CD4-positive, alpha-beta T cell (primary cell): ENCODE measurements at regions of chr12 and their contacts with region 1.

Region 1: DNA sequence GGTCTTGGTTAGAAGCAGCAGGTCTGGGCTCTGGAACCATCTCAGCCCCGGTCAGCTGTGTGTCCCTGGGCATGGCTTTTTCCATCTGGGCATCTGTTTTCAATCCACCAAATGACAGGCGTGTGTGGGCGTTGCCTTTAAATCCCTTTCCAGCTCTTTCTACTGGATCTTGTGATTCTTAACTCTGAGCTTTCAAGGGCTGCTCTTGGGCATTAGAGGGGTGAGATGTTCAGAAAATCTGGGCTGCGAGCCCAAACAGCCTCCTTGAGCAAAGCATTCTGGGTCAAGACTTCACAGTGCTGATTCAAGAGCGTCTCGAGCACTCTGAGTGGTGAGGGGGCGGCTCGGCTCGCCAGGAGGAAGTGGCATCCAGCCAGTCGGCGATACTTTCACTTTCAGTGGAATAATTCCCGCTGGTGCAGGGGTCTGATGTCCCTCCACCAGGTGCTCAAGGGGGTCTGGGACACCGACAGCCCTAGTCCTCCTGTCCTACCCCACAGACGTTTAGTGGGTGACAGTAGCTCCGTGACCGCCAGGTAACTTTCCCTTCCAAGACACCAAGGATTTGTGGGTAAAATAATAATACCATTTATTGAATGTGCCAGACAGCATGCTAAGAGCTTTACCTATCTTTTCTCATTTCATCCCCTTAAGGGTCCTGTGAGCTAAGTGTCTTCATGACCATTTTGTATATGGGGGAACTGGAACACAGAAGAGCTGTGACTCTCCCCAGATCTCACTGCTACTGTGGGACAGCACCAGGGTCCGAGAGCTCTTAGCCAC is 114.0 kb downstream of the PLXNC1 start:
- DNase-seq: peak; percentile 50 to 86 (median 66)
- ATAC-seq: peak; percentile 90
- H3K4me3 ChIP-seq: peak overlapping the region; percentile 82
- H3K4me3 Mint-ChIP-seq: peak overlapping the region; percentile 98
- H3K27ac ChIP-seq: peak overlapping the region; percentile 89 to 92
- H3K27ac Mint-ChIP-seq: peak overlapping the region; percentile 99
- H3K4me1 ChIP-seq: peaks cover 31% of the 10 kb centered on the region
- H3K4me1 Mint-ChIP-seq: peaks cover 46% of the 10 kb centered on the region
- H3K27me3 ChIP-seq: no peaks in the 10 kb centered on the region
- H3K27me3 Mint-ChIP-seq: no peaks in the 10 kb centered on the region
- CTCF ChIP-seq: no peak

Region 2: DNA sequence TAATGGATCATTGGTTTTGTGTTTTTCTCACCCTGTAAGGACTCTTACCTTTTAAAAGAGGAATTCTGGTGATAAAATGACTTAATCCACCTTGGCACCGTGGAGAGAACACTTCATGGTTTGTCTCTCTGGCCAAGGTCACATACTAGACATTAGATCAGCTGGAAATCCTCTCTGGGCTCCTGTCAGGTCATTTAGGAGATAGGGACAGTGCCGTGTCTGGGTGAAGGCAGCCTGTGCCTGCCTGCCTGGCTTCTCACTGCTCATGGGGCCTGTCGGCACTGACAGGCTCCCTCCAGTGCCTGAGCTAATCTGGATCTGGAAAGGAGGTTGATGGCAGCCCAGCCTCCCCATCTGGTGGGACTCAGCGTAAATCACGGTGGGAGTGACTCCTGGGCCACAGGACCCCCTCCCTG is 579.6 kb before region 1 on chr12:
- CTCF ChIA-PET with region 1: no interaction called
- POLR2A ChIA-PET with region 1: no interaction called
- intact Hi-C with region 1: loop called in 1 of 2 experiments (anchors 10 kb)
- DNase-seq: no peak
- ATAC-seq: no peak
- H3K4me3 ChIP-seq: no peak overlapping the region
- H3K4me3 Mint-ChIP-seq: no peak overlapping the region
- H3K27ac ChIP-seq: no peak overlapping the region
- H3K27ac Mint-ChIP-seq: no peak overlapping the region
- H3K4me1 ChIP-seq: peaks cover 21% of the 10 kb centered on the region
- H3K4me1 Mint-ChIP-seq: peaks cover 47% of the 10 kb centered on the region
- H3K27me3 ChIP-seq: no peaks in the 10 kb centered on the region
- H3K27me3 Mint-ChIP-seq: no peaks in the 10 kb centered on the region
- CTCF ChIP-seq: no peak

Region 3: DNA sequence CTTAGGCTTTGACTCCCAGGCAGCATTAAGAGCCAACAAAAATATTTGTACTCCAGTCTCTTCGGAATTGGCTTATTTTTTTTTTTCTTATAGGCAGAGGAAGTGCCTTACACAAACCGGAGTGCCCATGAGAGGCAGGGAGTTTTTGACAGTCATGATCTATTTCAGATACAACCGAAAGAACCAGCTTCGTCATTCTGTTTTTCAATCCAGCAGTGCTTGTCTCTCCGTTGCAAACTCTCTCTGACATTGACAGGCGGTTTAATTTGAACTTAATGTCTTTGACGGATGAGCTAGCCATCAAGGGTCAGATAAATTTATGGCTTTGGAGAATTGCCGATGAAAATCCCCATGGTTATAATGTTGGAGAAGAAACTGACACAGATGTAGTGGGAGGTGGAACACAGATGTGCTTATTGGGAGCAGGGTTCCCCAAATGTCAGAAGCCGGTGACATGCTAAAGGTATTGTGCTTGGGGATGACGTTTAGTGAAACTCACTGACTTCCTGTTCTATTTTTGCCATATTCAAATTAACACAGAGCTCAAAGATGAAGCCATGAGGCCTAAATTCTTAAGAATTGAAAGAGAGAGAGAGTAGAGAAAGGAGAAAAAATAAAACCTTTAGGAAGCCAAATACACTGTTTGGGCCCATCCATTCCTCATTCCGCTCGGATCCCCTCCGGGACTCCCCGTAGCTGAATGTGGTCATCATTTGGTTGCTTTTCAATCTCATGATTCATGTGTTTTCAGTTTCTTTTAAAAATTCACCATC is 54.4 kb before region 1 on chr12:
- CTCF ChIA-PET with region 1: no interaction called
- POLR2A ChIA-PET with region 1: interaction called, 33 read pairs
- intact Hi-C with region 1: loop called in 1 of 2 experiments (anchors 2 kb)
- DNase-seq: peak in 10 of 14 experiments; percentile 1 to 78 (median 15)
- ATAC-seq: peak; percentile 80
- H3K4me3 ChIP-seq: peak overlapping the region; percentile 41
- H3K4me3 Mint-ChIP-seq: peak overlapping the region; percentile 74
- H3K27ac ChIP-seq: peak overlapping the region; percentile 71 to 83
- H3K27ac Mint-ChIP-seq: peak overlapping the region; percentile 97
- H3K4me1 ChIP-seq: peaks cover 36% of the 10 kb centered on the region
- H3K4me1 Mint-ChIP-seq: peaks cover 53% of the 10 kb centered on the region
- H3K27me3 ChIP-seq: no peaks in the 10 kb centered on the region
- H3K27me3 Mint-ChIP-seq: no peaks in the 10 kb centered on the region
- CTCF ChIP-seq: no peak

Region 4: DNA sequence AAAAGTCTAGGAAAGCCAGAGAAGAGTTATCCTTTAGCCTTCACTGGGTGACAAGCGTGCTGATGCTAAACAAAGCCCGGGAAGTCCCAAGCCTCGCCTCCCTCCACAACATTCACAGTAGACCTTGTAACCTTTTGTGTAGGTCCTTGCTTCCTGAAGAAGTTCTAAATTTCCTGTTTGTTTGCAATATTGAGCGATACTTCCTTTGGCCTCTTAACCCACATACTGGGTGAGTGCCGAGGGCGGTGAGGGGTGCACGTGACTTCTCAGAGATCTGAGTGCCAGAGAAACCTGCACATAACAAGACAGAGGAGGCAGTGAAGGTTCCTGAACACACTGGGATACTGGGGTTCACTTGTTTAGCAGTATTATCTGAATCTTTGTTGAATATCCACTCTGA is 20.3 kb after region 1 on chr12:
- CTCF ChIA-PET with region 1: no interaction called
- POLR2A ChIA-PET with region 1: interaction called, 16 read pairs
- intact Hi-C with region 1: no loop called
- DNase-seq: peak in 13 of 14 experiments; percentile 21 to 82 (median 41)
- ATAC-seq: peak; percentile 95
- H3K4me3 ChIP-seq: peak overlapping the region; percentile 27
- H3K4me3 Mint-ChIP-seq: peak overlapping the region; percentile 49
- H3K27ac ChIP-seq: peak overlapping the region; percentile 11 to 58
- H3K27ac Mint-ChIP-seq: peak overlapping the region; percentile 80
- H3K4me1 ChIP-seq: peaks cover 25% of the 10 kb centered on the region
- H3K4me1 Mint-ChIP-seq: peaks cover 22% of the 10 kb centered on the region
- H3K27me3 ChIP-seq: no peaks in the 10 kb centered on the region
- H3K27me3 Mint-ChIP-seq: no peaks in the 10 kb centered on the region
- CTCF ChIP-seq: no peak

Region 5: DNA sequence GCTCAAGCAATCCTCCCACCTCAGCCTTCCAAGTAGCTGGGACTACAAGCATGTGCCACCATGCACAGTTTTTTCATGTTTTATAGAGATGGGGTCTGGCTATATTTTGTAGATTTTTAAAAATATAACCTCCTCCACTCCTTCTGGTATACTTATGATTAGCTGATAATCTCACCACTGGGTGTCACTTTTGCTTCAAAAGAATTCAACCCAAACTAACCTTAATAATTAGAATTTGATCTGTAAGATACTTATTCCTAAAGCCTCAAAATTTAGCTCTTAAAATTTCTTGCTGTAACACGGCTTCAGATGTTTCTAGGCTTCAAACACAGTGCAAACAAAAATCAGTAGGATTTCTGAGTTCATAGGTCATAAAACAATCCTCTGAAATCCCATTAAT is 66.9 kb after region 1 on chr12:
- CTCF ChIA-PET with region 1: no interaction called
- POLR2A ChIA-PET with region 1: no interaction called
- intact Hi-C with region 1: no loop called
- DNase-seq: no peak
- ATAC-seq: no peak
- H3K4me3 ChIP-seq: no peak overlapping the region
- H3K4me3 Mint-ChIP-seq: no peak overlapping the region
- H3K27ac ChIP-seq: no peak overlapping the region
- H3K27ac Mint-ChIP-seq: no peak overlapping the region
- H3K4me1 ChIP-seq: no peaks in the 10 kb centered on the region
- H3K4me1 Mint-ChIP-seq: no peaks in the 10 kb centered on the region
- H3K27me3 ChIP-seq: no peaks in the 10 kb centered on the region
- H3K27me3 Mint-ChIP-seq: no peaks in the 10 kb centered on the region
- CTCF ChIP-seq: no peak